ENCODE measurements at regions of chr15 and their contacts with region 1.

Region 1: GRCh38 chr15:68304589-68305337 is 27.2 kb downstream of the FEM1B start:
- DNase-seq: peak in 1 of 5 donors; percentile 14
- ATAC-seq: no peak
- H3K4me3 ChIP-seq: no peak overlapping the region
- H3K27ac ChIP-seq: no peak overlapping the region
- H3K4me1 ChIP-seq: peaks cover 0 to 25% (median 7%) of the 10 kb centered on the region in 12 donors
- H3K27me3 ChIP-seq: no peaks in the 10 kb centered on the region
- CTCF ChIP-seq: no peak
- POLR2A ChIP-seq: no peak

Region 2: GRCh38 chr15:68341760-68342725 is 37.3 kb after region 1 on chr15:
- intact Hi-C with region 1: no loop called
- DNase-seq: peak in 2 of 5 donors; percentile 40 to 59
- ATAC-seq: peak; percentile 23 to 48 (median 36)
- H3K4me3 ChIP-seq: no peak overlapping the region
- H3K27ac ChIP-seq: peak overlapping the region; percentile 61 to 87 (median 74)
- H3K4me1 ChIP-seq: peaks cover 8 to 39% (median 27%) of the 10 kb centered on the region in 12 donors
- H3K27me3 ChIP-seq: no peaks in the 10 kb centered on the region
- CTCF ChIP-seq: no peak
- POLR2A ChIP-seq: no peak

Region 3: DNA sequence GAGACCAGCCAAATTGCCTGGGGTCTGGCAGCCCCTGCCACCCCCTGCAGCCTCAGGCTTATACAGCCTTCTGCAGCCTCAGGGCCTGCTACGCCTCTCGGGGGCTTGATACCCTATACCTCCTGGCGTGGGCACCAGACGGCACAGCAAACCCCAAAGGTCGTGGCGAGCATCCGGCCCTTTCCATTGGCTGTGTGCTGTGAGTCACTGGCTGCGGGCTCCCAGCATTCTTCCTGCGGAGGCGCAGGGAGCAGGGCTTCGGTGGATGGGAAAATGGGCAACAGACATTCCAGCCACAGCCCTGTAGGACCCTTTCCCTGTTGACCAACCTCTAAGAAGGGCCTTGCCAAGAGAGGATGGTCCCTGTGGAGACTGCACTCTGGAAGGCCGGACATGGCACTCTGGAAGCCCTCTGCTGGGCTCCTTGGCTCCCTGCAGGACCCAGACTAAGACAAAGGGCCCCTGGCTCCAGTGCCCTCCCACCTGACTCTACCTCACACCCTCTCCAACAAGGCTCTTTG is 67.6 kb after region 1 on chr15:
- intact Hi-C with region 1: loop called in 1 of 10 experiments (anchors 2 kb)
- DNase-seq: peak in 3 of 5 donors; percentile 25 to 53 (median 29)
- ATAC-seq: peak; percentile 29 to 66 (median 58)
- H3K4me3 ChIP-seq: no peak overlapping the region
- H3K27ac ChIP-seq: no peak overlapping the region
- H3K4me1 ChIP-seq: peaks cover 6 to 35% (median 16%) of the 10 kb centered on the region in 12 donors
- H3K27me3 ChIP-seq: no peaks in the 10 kb centered on the region
- CTCF ChIP-seq: peak; percentile 32 to 60 (median 46)
- POLR2A ChIP-seq: no peak

Region 4: GRCh38 chr15:68517285-68517761 is 212.6 kb after region 1 on chr15:
- intact Hi-C with region 1: loop called in 1 of 10 experiments (anchors 10 kb)
- DNase-seq: peak in 3 of 5 donors; percentile 60 to 72 (median 60)
- ATAC-seq: peak; percentile 63 to 90 (median 86)
- H3K4me3 ChIP-seq: no peak overlapping the region
- H3K27ac ChIP-seq: peak overlapping the region in 11 of 12 donors; percentile 13 to 68 (median 41)
- H3K4me1 ChIP-seq: peaks cover 0 to 26% (median 15%) of the 10 kb centered on the region in 12 donors
- H3K27me3 ChIP-seq: no peaks in the 10 kb centered on the region
- CTCF ChIP-seq: peak in 10 of 12 donors; percentile 6 to 45 (median 32)
- POLR2A ChIP-seq: no peak

Region 5: DNA sequence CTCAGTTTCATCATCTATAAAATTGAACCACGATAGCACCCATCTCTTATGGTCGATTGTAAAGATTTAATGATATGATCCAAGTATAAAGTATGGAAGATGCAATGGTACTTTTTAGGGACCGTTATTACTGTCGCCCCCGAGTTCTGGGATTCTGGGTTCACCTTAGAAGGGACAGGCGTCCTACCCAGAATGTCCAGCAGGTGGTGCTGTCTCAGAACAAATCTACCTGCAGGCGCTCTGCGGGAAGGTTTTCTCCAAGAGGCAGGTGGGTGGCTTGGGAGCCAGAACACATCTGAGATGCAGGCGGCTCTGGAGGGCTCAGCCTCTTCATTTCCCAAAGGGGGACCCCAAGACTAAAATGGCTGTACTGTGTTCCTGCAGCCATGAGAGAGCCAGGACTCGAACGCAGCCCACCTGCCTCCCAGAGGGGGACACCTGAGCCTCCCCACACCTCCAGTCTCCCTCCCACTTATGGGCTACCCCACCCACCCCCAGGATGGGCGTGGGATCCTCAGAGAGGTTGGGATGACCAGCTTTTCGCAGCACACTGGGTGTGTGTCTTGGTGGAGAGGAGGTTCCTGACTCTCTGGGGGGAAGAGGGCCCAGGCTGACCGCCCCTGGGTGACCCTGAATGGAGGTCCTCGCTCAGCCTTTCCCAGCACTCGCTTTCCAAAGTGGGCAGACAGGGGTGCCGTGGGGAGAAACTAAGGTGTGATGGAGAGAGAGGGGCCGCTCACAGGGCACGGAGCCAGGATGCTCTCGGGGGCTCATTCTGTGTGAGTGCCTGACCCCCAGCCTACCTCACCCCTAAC is 245.9 kb after region 1 on chr15:
- intact Hi-C with region 1: loop called in 7 of 10 experiments (anchors 5 to 10 kb)
- DNase-seq: peak; percentile 60 to 83 (median 72)
- ATAC-seq: peak in 3 of 4 donors; percentile 38 to 58 (median 43)
- H3K4me3 ChIP-seq: no peak overlapping the region
- H3K27ac ChIP-seq: no peak overlapping the region
- H3K4me1 ChIP-seq: peaks cover 0 to 8% (median 0%) of the 10 kb centered on the region in 12 donors
- H3K27me3 ChIP-seq: no peaks in the 10 kb centered on the region
- CTCF ChIP-seq: peak; percentile 89 to 97 (median 93)
- POLR2A ChIP-seq: no peak

Region 6: GRCh38 chr15:68650901-68651709 is 346.3 kb after region 1 on chr15:
- intact Hi-C with region 1: loop called in 1 of 10 experiments (anchors 10 kb)
- DNase-seq: peak in 3 of 5 donors; percentile 52 to 80 (median 53)
- ATAC-seq: peak in 3 of 4 donors; percentile 47 to 52 (median 50)
- H3K4me3 ChIP-seq: no peak overlapping the region
- H3K27ac ChIP-seq: peak overlapping the region in 1 of 12 donors; percentile 68
- H3K4me1 ChIP-seq: peaks cover 0 to 19% (median 1%) of the 10 kb centered on the region in 12 donors
- H3K27me3 ChIP-seq: no peaks in the 10 kb centered on the region
- CTCF ChIP-seq: peak; percentile 39 to 80 (median 66)
- POLR2A ChIP-seq: no peak

Region 7: DNA sequence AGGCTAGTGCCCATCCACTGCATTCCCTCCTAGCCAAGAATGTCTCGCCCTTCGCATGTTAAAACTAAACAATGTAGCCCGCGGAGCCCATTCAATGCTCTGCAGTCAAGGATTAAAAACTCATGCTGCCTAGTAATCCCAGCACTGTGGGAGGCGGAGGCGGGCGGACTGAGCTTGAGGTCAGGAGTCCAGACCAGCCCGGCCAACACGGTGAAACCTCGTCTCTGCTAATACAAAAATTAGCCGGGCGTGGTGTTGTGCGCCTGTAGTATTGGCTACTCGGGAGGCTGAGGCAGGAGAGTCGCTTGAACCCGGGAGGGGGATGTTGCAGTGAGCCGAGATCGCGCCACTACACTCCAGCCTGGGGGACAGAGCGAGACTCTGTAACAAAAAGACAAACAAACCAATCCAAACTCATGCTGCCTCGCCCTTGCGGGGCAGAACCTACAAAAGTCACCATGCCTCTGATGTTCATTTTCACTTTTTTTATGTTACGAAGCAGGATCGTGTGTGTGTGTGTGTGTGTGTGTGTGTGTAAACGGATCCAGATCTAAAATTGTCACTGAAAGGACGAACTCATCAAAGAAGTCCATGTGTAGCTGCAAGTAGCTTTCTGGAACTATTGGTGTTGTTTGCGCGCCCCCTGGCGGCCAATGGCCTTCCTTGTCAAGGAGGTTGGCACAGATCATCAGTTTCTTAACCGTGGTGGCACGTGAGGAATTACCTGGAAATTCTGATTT is 570.8 kb after region 1 on chr15:
- intact Hi-C with region 1: loop called in 1 of 10 experiments (anchors 5 kb)
- DNase-seq: peak; percentile 87 to 96 (median 89)
- ATAC-seq: peak; percentile 80 to 96 (median 93)
- H3K4me3 ChIP-seq: peak overlapping the region in 10 of 12 donors; percentile 32 to 53 (median 44)
- H3K27ac ChIP-seq: no peak overlapping the region
- H3K4me1 ChIP-seq: peaks cover 0 to 8% (median 0%) of the 10 kb centered on the region in 12 donors
- H3K27me3 ChIP-seq: peaks cover 0 to 4% (median 0%) of the 10 kb centered on the region in 9 donors
- CTCF ChIP-seq: peak; percentile 77 to 91 (median 86)
- POLR2A ChIP-seq: no peak